ENCODE measurements at regions of chr16 and their contacts with region 1.

Region 1: GRCh38 chr16:50665128-50665878 is 15.8 kb downstream of the SNX20 start:
- DNase-seq: peak; percentile 73 to 84 (median 76)
- H3K4me3 ChIP-seq: peak overlapping the region; percentile 76
- H3K4me3 Mint-ChIP-seq: peak overlapping the region; percentile 69 to 93 (median 84)
- H3K27ac ChIP-seq: peak overlapping the region; percentile 18
- H3K27ac Mint-ChIP-seq: peak overlapping the region in 7 of 8 donors; percentile 61 to 97 (median 83)
- H3K4me1 ChIP-seq: peaks cover 30% of the 10 kb centered on the region
- H3K4me1 Mint-ChIP-seq: peaks cover 29 to 43% (median 38%) of the 10 kb centered on the region in 3 donors
- H3K27me3 ChIP-seq: no peaks in the 10 kb centered on the region
- H3K27me3 Mint-ChIP-seq: no peaks in the 10 kb centered on the region

Region 2: GRCh38 chr16:50273681-50274325 is 391.5 kb before region 1 on chr16:
- CTCF ChIA-PET with region 1: interaction called, 14 read pairs
- POLR2A ChIA-PET with region 1: no interaction called
- DNase-seq: peak in 2 of 5 donors; percentile 40 to 57
- H3K4me3 ChIP-seq: peak overlapping the region; percentile 67
- H3K4me3 Mint-ChIP-seq: peak overlapping the region; percentile 85 to 97 (median 90)
- H3K27ac ChIP-seq: peak overlapping the region; percentile 66
- H3K27ac Mint-ChIP-seq: peak overlapping the region; percentile 94 to 99 (median 98)
- H3K4me1 ChIP-seq: peaks cover 98% of the 10 kb centered on the region
- H3K4me1 Mint-ChIP-seq: peaks cover 93 to 100% (median 93%) of the 10 kb centered on the region in 3 donors
- H3K27me3 ChIP-seq: no peaks in the 10 kb centered on the region
- H3K27me3 Mint-ChIP-seq: no peaks in the 10 kb centered on the region

Region 3: GRCh38 chr16:50354629-50355456 is 310.5 kb before region 1 on chr16:
- CTCF ChIA-PET with region 1: interaction called, 27 read pairs
- POLR2A ChIA-PET with region 1: no interaction called
- DNase-seq: peak in 2 of 5 donors; percentile 35 to 51
- H3K4me3 ChIP-seq: no peak overlapping the region
- H3K4me3 Mint-ChIP-seq: no peak overlapping the region
- H3K27ac ChIP-seq: no peak overlapping the region
- H3K27ac Mint-ChIP-seq: peak overlapping the region in 6 of 8 donors; percentile 0 to 91 (median 39)
- H3K4me1 ChIP-seq: peaks cover 15% of the 10 kb centered on the region
- H3K4me1 Mint-ChIP-seq: peaks cover 12 to 48% (median 33%) of the 10 kb centered on the region in 3 donors
- H3K27me3 ChIP-seq: no peaks in the 10 kb centered on the region
- H3K27me3 Mint-ChIP-seq: no peaks in the 10 kb centered on the region

Region 4: DNA sequence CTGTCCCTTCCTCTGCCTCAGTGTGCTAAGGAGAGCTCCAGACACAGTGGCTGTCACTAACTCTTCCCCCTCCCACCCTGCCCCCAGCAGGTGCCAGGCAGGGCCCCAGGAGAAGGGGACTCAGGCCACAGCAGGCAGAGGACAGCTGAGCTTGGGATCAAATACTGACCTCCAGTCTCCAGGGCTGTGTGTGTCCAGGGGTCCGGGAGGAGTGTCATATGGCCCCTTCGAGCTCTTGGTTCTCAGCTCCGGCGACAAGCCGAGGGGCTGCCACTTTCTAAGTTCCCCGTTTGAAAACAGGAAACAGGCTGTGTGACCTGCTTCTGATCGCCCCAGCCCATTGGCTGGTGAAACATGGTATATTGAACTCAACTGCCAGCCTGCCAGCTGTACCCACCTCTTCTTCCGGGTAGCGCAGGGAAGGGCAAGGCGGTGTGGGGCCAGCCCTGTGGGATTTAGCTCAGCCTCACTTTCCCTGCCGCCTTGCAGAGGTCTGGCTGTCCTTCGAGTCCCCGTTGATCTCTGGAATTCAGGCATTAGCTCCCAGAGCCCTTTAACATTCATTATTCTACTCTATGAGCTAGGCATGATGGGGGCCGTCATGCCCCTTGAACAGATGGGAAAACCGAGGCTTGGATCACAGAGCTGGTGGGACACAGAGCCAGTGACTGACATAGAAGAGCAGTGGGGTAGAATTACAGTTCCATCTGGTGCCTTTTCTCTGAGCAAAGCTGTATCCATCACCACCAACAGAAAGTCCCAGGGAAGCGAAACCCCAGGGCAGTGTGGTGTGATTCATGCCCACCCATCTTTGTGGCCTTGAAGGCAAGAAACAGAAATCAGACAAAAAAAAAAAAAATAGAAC is 15.9 kb after region 1 on chr16 and contains the start of gene SNX20:
- CTCF ChIA-PET with region 1: interaction called, 116 read pairs
- POLR2A ChIA-PET with region 1: interaction called, 3 read pairs
- DNase-seq: peak; percentile 55 to 81 (median 71)
- H3K4me3 ChIP-seq: peak within 1 kb of the TSS; percentile 89
- H3K4me3 Mint-ChIP-seq: peak within 1 kb of the TSS; percentile 91 to 99 (median 93)
- H3K27ac ChIP-seq: peak within 1 kb of the TSS; percentile 74
- H3K27ac Mint-ChIP-seq: peak within 1 kb of the TSS; percentile 90 to 98 (median 97)
- H3K4me1 ChIP-seq: peaks cover 94% of the 10 kb centered on the region
- H3K4me1 Mint-ChIP-seq: peaks cover 80 to 93% (median 92%) of the 10 kb centered on the region in 3 donors
- H3K27me3 ChIP-seq: no peaks in the 10 kb centered on the region
- H3K27me3 Mint-ChIP-seq: no peaks in the 10 kb centered on the region
- total RNA-seq, gene SNX20: 25.0 to 27.8 TPM

Region 5: DNA sequence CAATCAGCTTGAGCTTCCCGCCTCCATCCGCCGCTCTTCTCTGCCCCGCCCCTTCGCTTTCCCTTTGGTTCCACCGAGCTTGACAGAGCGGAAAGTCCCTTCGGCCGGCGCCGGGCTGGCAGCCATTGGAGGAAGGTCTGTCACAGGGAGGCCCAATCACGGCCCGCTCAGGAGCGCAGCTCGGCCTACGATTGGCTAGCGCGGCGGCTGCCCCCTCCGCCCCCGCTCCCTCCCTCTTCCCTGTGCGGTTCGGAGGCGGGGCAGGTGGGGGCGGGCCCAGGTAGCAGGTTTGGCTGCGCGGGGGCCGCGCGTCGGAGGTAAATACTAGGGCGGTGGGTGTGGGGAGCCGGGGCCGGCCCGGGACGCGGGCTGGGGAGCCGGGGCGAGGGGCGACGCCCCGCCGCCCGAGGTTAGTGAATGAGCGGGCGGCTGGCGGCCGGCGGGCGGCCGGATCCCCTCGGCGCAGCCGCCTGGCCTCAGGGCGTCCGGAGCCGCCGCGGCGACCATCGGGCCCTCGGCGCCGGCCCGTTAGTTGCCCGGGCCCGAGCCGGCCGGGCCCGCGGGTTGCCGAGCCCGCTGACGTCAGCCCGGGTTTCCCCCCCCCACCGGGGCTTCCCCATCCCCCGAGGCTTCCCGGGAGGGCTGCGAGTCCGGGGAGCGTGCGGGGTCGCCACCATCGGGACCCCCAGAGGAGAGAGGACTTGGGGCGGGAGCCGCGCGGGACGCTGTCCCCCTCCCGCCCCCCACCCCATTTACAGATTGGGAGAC is 76.7 kb after region 1 on chr16 and contains the start of gene CYLD:
- CTCF ChIA-PET with region 1: interaction called, 39 read pairs
- POLR2A ChIA-PET with region 1: interaction called, 5 read pairs
- DNase-seq: peak; percentile 99 to 100 (median 100)
- H3K4me3 ChIP-seq: peak within 1 kb of the TSS; percentile 83
- H3K4me3 Mint-ChIP-seq: peak within 1 kb of the TSS; percentile 91 to 99 (median 96)
- H3K27ac ChIP-seq: peak within 1 kb of the TSS; percentile 96
- H3K27ac Mint-ChIP-seq: peak within 1 kb of the TSS; percentile 95 to 100 (median 98)
- H3K4me1 ChIP-seq: peaks cover 31% of the 10 kb centered on the region
- H3K4me1 Mint-ChIP-seq: peaks cover 42 to 53% (median 50%) of the 10 kb centered on the region in 3 donors
- H3K27me3 ChIP-seq: no peaks in the 10 kb centered on the region
- H3K27me3 Mint-ChIP-seq: peaks cover 0 to 4% of the 10 kb centered on the region in 2 donors
- total RNA-seq, gene CYLD: 144 to 152 TPM

Region 6: DNA sequence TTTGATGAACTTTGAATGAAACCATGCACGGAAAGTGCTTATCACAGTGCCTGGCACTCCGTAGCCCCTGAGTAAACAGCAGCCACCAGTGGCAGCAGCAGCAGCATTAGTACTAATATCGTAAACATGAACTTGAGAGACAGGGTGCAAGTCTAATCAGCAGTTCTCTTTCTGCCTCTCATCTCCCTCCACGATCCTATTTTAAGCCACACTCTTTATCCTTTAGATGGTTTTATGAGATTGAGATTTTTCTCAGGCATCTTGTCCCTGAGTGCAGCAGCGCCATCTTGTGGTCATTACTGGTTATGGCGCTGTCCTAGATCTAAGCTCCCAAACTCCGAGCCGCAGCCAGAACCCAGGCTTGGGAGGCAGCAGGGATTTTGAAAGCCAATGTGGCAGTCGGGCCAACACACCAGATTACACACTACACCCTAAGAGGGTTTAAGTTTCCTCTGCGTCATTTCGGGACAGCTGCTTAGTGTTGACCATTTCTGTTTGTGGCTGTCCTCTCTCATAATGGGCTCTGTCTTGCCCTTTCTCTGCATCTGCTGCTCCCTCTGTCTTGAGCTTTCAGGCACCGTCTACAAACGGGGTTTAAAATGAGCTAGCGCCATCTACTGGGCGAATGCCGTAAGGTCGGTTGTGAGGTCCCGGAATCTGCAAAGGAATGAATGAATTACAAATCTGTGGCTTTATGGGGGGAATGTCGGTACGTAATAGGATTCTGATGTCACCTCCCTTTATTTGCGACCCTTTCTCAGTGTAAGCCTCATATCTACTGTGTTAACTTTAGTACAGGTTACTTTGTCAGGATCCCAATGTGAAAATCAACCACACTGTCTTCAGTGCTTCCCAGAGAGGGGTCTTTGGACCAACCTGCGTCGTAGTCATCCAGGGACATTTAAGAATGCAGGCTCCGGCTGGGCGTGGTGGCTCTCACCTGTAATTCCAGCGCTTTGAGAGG is 141.1 kb after region 1 on chr16:
- CTCF ChIA-PET with region 1: interaction called, 79 read pairs
- POLR2A ChIA-PET with region 1: no interaction called
- DNase-seq: peak; percentile 76 to 89 (median 86)
- H3K4me3 ChIP-seq: peak overlapping the region; percentile 53
- H3K4me3 Mint-ChIP-seq: peak overlapping the region; percentile 15 to 87 (median 80)
- H3K27ac ChIP-seq: no peak overlapping the region
- H3K27ac Mint-ChIP-seq: peak overlapping the region; percentile 4 to 91 (median 78)
- H3K4me1 ChIP-seq: peaks cover 6% of the 10 kb centered on the region
- H3K4me1 Mint-ChIP-seq: peaks cover 8 to 12% (median 10%) of the 10 kb centered on the region in 3 donors
- H3K27me3 ChIP-seq: no peaks in the 10 kb centered on the region
- H3K27me3 Mint-ChIP-seq: peaks cover 0 to 2% of the 10 kb centered on the region in 2 donors

Region 7: GRCh38 chr16:50944436-50944835 is 279.1 kb after region 1 on chr16:
- CTCF ChIA-PET with region 1: no interaction called
- POLR2A ChIA-PET with region 1: no interaction called
- DNase-seq: no peak
- H3K4me3 ChIP-seq: no peak overlapping the region
- H3K4me3 Mint-ChIP-seq: no peak overlapping the region
- H3K27ac ChIP-seq: no peak overlapping the region
- H3K27ac Mint-ChIP-seq: no peak overlapping the region
- H3K4me1 ChIP-seq: no peaks in the 10 kb centered on the region
- H3K4me1 Mint-ChIP-seq: no peaks in the 10 kb centered on the region
- H3K27me3 ChIP-seq: no peaks in the 10 kb centered on the region
- H3K27me3 Mint-ChIP-seq: peaks cover 6 to 7% of the 10 kb centered on the region in 2 donors

Measured in CD8-positive, alpha-beta memory T cell (primary cell).